PC-3 (cell line): ENCODE measurements at regions of chr3 and their contacts with region 1.

Region 1: GRCh38 chr3:113575206-113575605 is 42.9 kb downstream of the SIDT1 start:
- DNase-seq: peak; percentile 40
- ATAC-seq: peak; percentile 7; the same call in 1 of the 2 replicates
- H3K4me3 ChIP-seq: no peak overlapping the region
- H3K27ac ChIP-seq: peak overlapping the region; percentile 96
- H3K4me1 ChIP-seq: peaks cover 39% of the 10 kb centered on the region
- H3K27me3 ChIP-seq: no peaks in the 10 kb centered on the region
- CTCF ChIP-seq: no peak

Region 2: GRCh38 chr3:113051302-113051711 is 523.9 kb before region 1 on chr3:
- CTCF ChIA-PET with region 1: interaction called, 4 read pairs
- POLR2A ChIA-PET with region 1: no interaction called
- intact Hi-C with region 1: loop called (anchors 5 kb)
- DNase-seq: peak; percentile 97
- ATAC-seq: peak; percentile 95
- H3K4me3 ChIP-seq: peak overlapping the region; percentile 39
- H3K27ac ChIP-seq: no peak overlapping the region
- H3K4me1 ChIP-seq: peaks cover 4% of the 10 kb centered on the region
- H3K27me3 ChIP-seq: no peaks in the 10 kb centered on the region
- CTCF ChIP-seq: peak; percentile 95

Region 3: GRCh38 chr3:113136071-113136470 is 439.1 kb before region 1 on chr3:
- CTCF ChIA-PET with region 1: no interaction called
- POLR2A ChIA-PET with region 1: no interaction called
- intact Hi-C with region 1: loop called (anchors 5 kb)
- DNase-seq: peak; percentile 60
- ATAC-seq: peak; percentile 46
- H3K4me3 ChIP-seq: no peak overlapping the region
- H3K27ac ChIP-seq: no peak overlapping the region
- H3K4me1 ChIP-seq: peaks cover 16% of the 10 kb centered on the region; the same call in 1 of the 2 replicates
- H3K27me3 ChIP-seq: no peaks in the 10 kb centered on the region
- CTCF ChIP-seq: peak; percentile 90

Region 4: DNA sequence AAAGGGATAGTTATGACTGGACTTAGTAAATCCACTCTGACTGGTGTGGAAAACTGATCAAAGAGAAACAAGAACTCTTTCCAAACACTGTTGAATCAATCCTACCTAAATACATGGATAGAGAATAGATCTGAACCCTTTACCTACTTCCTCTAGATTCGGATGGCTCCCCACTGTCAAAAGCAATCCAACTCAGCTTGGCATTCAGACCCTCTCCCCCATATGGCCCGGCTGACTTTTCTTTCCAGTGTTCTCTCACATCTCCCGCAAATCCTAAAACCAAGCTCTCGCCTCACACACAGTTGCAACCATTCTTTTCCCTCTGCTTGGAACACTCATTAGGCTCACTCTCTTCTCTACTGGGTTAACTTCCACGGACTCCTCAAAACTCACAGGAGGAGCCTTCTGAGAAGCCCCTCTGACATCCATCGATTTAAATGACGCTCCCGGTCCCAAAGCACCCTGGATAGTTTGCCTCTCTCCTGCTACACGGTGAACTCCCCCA is 60.9 kb before region 1 on chr3:
- CTCF ChIA-PET with region 1: interaction called, 30 read pairs
- POLR2A ChIA-PET with region 1: interaction called, 6 read pairs
- intact Hi-C with region 1: no loop called
- DNase-seq: no peak
- ATAC-seq: no peak; the same call in 1 of the 2 replicates
- H3K4me3 ChIP-seq: peak overlapping the region; percentile 89
- H3K27ac ChIP-seq: peak overlapping the region; percentile 81
- H3K4me1 ChIP-seq: peaks cover 19% of the 10 kb centered on the region
- H3K27me3 ChIP-seq: no peaks in the 10 kb centered on the region
- CTCF ChIP-seq: no peak

Region 5: DNA sequence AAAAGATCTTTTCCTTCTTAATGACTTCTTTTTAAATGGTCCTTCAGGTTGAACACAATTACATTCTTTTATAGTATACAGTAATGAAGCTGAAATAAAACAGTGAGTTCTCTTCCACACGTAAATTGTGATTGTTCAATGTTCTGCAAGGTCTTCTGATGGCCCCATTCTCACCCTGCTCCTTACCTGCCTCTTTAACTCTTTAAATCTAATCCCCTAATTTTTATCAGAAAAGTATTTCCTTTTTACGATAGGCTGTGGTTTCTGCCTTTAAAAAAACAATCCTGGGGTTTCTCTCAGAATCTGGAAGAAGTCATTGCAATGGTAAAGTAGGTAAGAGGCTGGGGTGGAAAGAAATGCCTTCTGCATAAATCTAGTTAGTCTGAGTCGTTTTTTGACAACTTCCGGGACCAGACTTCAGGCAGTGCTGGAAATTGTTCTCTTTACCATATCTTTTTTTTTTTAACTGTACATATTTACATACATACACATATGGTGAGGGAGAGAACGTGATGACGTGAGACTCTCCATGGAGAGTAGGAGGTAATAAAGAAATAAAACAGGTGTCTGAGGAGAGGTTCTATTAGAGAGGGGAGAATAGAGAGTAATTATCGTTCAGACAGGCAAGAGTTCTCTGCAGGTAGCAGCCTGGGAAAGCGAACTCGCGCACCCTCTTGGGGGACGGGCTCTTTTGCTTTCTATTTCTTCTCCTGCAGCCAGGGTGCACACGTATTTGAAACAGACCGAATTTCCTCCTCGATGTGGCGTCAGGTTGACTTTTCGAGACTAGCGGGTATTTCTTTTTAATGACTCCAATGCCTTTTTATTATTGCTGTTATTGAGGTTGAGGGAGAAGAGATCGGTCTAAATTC is 43.1 kb before region 1 on chr3 and contains the start of gene SIDT1:
- CTCF ChIA-PET with region 1: interaction called, 15 read pairs
- POLR2A ChIA-PET with region 1: no interaction called
- intact Hi-C with region 1: loop called (anchors 1 kb)
- DNase-seq: peak; percentile 76
- ATAC-seq: peak; percentile 43
- H3K4me3 ChIP-seq: peak within 1 kb of the TSS; percentile 84
- H3K27ac ChIP-seq: peak within 1 kb of the TSS; percentile 95
- H3K4me1 ChIP-seq: peaks cover 44% of the 10 kb centered on the region
- H3K27me3 ChIP-seq: no peaks in the 10 kb centered on the region
- CTCF ChIP-seq: peak; percentile 35
- total RNA-seq, gene SIDT1: 14.1 and 18.4 TPM in 2 replicates

Region 6: GRCh38 chr3:113552851-113553250 is 22.4 kb before region 1 on chr3:
- CTCF ChIA-PET with region 1: interaction called, 8 read pairs
- POLR2A ChIA-PET with region 1: interaction called, 19 read pairs
- intact Hi-C with region 1: loop called (anchors 1 kb)
- DNase-seq: peak; percentile 26
- ATAC-seq: no peak
- H3K4me3 ChIP-seq: no peak overlapping the region
- H3K27ac ChIP-seq: peak overlapping the region; percentile 96
- H3K4me1 ChIP-seq: peaks cover 63% of the 10 kb centered on the region
- H3K27me3 ChIP-seq: no peaks in the 10 kb centered on the region
- CTCF ChIP-seq: peak; percentile 41